Right ventricle myocardium inferior (tissue), 1 donor: ENCODE measurements at regions of chr14 and their contacts with region 1.

Region 1: DNA sequence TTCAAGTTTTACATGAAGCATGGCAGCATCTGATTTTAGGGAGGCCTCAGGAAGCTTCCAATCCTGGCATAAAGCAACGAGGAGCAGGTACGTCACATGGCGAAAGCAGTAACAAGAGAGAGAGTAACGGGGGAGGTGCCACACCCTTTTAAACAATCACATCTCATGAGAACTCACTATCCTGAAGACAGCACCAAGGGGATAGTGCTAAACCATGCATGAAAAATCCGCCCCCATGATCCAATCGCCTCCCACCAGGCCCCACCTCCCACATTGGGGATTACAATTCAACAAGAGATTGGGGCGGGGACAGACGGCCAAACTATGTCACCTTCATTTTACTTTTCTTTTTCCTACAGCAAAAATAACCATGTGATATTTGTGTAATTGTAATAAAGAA is 7.2 kb upstream of the MAP3K9 start:
- DNase-seq: no peak
- ATAC-seq: no peak

Region 2: DNA sequence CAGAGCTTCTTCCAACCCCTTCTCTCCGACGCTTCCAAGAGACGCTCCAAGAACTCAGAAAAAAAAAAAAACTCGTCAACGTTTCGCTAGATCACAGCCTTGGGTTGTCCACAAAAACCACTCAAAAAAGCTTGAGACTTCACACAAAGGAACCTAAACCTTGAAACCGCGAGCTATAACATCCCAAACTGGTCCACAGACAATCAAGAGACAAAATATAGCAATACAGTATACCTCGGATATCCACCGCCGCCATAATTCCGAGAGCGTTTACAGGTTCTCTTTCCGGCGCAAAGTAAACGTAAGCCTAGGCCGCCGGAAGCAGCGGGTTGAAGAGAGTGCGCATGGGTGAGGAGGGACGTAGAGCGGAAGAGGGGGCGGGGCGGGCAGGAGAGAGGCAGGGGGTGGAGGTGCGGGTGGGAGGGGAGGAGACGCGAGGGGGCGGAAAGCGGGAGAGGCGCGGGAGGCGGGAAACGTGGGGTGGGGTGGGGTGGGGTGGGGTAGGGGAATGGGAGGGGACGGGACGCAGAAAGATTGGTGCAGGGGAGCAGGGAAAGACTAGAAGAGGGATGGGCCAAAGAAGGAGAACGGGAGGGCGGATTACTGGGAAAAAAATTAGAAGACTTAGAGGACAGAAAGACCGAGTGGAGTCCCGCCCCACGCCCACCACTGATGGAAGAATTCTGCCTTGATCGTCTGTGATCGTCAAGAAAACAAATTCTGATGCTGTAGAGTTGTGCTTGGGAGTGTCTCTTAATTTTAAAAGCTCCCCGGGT is 216.0 kb before region 1 on chr14 and contains the start of gene MED6:
- intact Hi-C with region 1: loop called (anchors 5 kb)
- DNase-seq: peak; percentile 96
- ATAC-seq: peak; percentile 100
- total RNA-seq, gene MED6: 16.7 TPM

Region 3: DNA sequence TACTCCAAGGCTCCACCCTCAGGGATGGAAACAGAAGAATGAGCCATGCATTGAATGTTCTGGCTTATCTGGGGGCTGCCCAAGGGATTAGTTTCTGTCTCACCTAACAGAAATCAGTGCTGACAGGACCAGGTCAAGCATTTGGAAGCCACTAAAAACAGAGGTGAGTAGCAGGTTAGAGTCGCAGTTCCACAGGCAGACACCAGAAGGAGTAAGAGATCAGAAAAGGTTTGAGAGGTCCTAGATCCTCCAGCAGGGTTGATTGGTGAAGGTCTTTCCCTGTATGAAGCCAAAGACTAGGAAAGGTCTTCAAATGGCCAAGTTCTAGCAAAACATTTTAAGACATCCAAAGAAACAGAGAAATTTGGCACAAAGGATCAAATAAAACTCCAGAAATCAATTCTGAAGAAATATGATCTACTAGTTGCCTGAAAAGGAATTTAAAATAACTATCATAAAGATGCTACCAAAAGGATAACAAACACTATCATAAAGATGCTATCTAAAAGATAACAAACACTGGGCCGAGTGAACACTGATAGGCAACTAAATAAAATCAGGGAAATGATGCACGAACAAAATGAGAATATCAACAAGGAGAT is 194.3 kb before region 1 on chr14:
- intact Hi-C with region 1: loop called (anchors 5 kb)
- DNase-seq: no peak
- ATAC-seq: peak; percentile 42

Region 4: DNA sequence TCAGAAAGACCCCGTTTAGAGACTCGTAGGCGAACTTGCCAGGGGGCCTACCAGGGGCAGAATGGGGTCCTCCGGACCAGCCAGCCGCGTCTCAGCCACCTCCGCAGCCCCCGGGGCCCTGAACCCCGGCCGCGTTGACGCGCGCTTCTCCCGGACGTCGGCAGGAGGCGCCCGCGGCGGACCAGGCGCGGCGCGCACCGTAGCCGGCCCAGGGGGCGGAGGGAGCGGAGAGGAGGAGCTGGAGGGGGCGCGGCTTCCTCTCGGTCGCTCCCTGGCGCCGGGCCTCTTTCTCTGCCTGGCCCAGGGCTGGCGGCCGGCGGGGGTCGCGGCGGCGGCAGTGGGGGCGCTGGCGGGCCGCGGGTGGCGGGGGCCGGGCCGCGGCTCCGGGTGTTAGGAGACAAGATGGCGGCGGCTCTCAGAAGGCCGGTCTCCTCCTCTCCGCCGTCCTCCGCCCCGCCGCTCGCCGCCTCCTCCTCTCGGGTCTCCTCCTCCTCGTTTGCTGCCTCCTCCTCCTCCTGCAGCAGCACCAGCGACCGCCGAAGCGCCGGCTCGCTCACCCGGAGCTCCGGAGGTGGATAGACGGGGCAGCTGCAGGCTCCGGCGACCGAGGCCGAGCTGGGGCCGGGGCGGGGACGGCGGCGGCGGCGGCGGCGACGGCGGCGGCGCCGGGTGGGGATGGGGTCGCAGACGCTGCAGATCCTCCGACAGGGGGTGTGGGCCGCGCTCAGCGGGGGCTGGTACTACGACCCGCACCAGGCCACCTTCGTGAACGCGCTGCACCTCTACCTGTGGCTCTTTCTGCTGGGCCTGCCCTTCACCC is 90.9 kb after region 1 on chr14 and contains the start of gene PCNX1:
- intact Hi-C with region 1: loop called (anchors 2 kb)
- DNase-seq: peak; percentile 96
- ATAC-seq: peak; percentile 91
- total RNA-seq, gene PCNX1: 33.6 TPM